Left cardiac atrium (tissue), 4 donors: ENCODE measurements at regions of chr5 and their contacts with region 1.

Region 1: DNA sequence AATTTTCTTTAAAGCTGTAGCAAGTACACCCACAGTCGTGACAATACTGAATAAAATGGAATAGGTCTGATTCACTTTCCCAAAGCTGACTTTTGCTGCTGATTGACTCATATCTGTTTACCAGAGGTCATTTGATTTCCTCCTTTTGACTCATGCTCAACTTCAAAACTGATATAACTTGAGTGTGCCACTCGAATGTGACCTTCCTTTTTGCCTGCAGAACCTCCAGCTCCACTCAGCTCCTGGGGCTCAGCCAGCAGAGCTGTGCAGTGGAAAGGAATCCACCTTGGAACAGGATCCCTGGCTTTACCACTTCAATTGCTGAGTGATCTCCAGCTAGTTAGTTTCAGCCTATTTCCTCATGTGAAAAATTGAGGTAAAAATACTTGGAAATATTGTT is 84.1 kb downstream of the FEM1C start:
- DNase-seq: peak; percentile 78
- ATAC-seq: peak; percentile 84 to 90

Region 2: GRCh38 chr5:115419846-115420585 is 40.5 kb before region 1 on chr5:
- intact Hi-C with region 1: loop called in 1 of 2 experiments (anchors 1 kb)
- DNase-seq: no peak
- ATAC-seq: peak in 1 of 2 donors; percentile 84

Region 3: DNA sequence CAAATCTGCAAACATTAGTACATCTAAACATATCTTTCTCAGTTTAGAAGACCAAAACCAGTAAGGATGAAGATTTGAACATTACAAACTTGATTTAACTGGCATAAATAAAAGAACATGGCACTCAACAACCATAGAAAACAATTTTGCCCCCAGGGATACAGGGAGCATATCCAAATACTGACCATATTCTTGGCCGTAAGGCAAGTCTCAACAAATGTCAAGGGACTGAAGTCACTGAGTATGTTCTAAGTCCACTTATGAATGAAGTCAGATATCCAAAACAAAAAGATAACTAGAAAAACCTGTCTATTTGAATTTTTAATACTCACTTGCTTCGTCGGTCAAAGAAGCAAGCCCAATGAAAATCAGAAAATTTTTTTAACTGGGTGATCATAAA is 70.0 kb after region 1 on chr5:
- intact Hi-C with region 1: loop called in 1 of 2 experiments (anchors 10 kb)
- DNase-seq: no peak
- ATAC-seq: peak; percentile 47 to 65

Region 4: GRCh38 chr5:116068028-116068632 is 607.7 kb after region 1 on chr5:
- intact Hi-C with region 1: no loop called
- DNase-seq: no peak
- ATAC-seq: peak in 1 of 2 donors; percentile 55